AG04449 (cell line): ENCODE measurements at regions of chr12 and their contacts with region 1.

Region 1: DNA sequence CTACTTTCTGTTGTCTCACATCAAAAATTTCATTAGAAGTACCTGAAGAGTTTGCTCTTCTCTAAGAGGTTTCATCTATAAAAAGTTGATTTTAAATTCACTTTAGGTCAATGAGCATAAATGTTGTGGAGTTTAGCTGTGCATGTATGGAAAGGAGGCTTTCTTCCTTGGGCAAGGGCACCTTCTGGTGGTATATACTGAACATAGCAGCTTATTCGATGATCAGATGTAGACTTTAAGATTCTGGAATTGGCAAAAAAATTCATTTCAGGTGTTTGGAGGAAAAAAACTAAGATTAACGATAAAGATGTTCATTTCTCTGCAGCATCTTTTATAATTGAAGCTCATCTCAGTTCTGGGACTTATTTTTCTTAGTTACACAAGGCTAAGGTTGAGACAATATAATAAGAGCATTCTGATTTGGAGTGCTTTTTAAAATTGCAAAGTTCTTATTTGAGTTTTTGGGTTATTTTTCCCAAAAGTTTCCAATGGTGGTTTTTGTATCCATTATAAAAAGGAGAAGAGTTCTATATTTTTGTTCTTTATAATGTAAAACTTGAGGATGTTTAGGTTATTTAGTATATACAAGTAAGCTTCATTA is 46.8 kb downstream of the TMEM117 start:
- DNase-seq: no peak
- H3K4me3 ChIP-seq: no peak overlapping the region
- CTCF ChIP-seq: peak; percentile 68

Region 2: GRCh38 chr12:43501703-43502102 is 381.0 kb before region 1 on chr12:
- CTCF ChIA-PET with region 1: interaction called, 27 read pairs
- POLR2A ChIA-PET with region 1: no interaction called
- DNase-seq: peak; percentile 1
- H3K4me3 ChIP-seq: no peak overlapping the region
- CTCF ChIP-seq: peak; percentile 21

Region 3: GRCh38 chr12:43776498-43776897 is 106.2 kb before region 1 on chr12:
- CTCF ChIA-PET with region 1: interaction called, 66 read pairs
- POLR2A ChIA-PET with region 1: no interaction called
- DNase-seq: no peak
- H3K4me3 ChIP-seq: no peak overlapping the region
- CTCF ChIP-seq: peak; percentile 31

Region 4: GRCh38 chr12:43861015-43861839 is 21.5 kb before region 1 on chr12:
- CTCF ChIA-PET with region 1: interaction called, 11 read pairs
- POLR2A ChIA-PET with region 1: no interaction called
- DNase-seq: no peak
- H3K4me3 ChIP-seq: no peak overlapping the region
- CTCF ChIP-seq: no peak